ENCODE measurements at regions of chr6 and their contacts with region 1.

Region 1: GRCh38 chr6:436308-437036 is 44.9 kb downstream of the IRF4 start:
- DNase-seq: peak; percentile 15
- H3K4me3 Mint-ChIP-seq: no peak overlapping the region
- H3K27ac Mint-ChIP-seq: no peak overlapping the region
- H3K4me1 Mint-ChIP-seq: peaks cover 44% of the 10 kb centered on the region
- H3K27me3 Mint-ChIP-seq: peaks cover 15% of the 10 kb centered on the region

Region 2: DNA sequence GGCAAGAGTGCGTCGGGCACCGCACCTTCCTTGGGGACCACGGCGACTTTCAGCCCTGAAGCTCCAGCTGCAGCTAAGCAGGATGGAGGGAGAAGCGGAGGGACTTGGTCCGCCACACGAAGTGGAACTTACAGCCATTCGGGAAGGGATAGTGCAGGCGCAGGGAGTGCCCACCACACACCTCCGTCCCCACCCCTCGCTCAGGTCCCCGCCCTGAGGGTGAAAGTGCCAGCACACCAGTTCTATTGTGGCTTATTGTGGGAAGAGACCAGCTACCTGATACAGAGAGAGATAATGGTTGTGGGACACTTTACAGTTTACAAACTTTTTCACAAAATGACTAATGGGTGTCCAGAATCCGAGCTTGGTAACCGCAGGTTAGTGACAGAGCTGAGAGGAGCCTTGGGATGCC is 31.2 kb after region 1 on chr6:
- CTCF ChIA-PET with region 1: interaction called, 4 read pairs
- POLR2A ChIA-PET with region 1: interaction called, 13 read pairs
- DNase-seq: peak; percentile 46
- H3K4me3 Mint-ChIP-seq: no peak overlapping the region
- H3K27ac Mint-ChIP-seq: no peak overlapping the region
- H3K4me1 Mint-ChIP-seq: peaks cover 43% of the 10 kb centered on the region
- H3K27me3 Mint-ChIP-seq: peaks cover 75% of the 10 kb centered on the region

Measured in activated CD4-positive, alpha-beta memory T cell treated with anti-CD3 and anti-CD28 coated beads, Interleukin-2, amount 10 ng/mL, durations not matched to agents 7 days and 5 days (primary cell).